Activated B cell treated with CpG ODN at 0.5 μM for 24 hours (primary cell): ENCODE measurements at regions of chr9 and their contacts with region 1.

Region 1: DNA sequence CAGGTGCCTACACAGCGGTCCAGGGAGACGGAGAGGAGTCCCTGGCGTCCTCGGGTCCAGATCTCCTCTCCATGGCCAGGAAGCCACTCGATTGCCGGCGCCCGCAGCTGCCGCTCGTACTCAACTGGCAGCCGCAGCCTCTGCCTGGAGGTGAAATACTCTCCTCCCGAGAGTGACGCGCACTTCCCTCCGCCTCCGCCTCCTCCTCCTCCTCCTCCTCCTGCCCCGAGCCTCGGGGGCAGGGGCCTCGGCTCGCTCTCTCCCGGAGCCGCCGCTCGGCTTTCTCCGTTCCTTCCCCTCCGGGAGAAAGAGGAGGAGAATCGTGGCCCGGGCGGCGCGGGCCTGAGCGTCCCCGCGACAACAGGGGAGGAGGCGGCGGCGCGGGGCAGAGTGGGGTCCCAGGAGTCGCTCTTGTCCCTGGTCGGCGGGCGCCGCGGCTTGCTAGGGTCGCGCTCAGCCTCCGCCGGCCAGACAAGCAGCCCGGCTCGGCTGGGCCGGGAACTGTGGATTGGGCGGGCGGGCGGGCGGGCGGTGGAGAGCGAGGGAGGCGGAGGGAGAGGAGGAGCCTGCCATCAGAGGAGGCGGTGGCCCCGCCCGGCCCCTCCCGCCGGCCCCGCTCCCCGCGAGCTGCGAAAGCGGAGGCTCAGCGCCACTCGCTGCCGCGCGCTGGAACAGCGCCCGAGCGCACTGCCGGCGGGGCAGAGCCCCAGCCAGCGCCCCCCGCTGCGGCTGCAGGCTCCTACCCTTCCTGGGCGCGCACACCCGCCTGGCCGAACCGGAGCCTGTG is at the start of gene CEMIP2:
- DNase-seq: peak; percentile 84
- ATAC-seq: peak; percentile 82
- H3K4me3 Mint-ChIP-seq: peak within 1 kb of the TSS; percentile 98
- H3K27ac Mint-ChIP-seq: peak within 1 kb of the TSS; percentile 93
- H3K4me1 Mint-ChIP-seq: peaks cover 52% of the 10 kb centered on the region
- H3K27me3 Mint-ChIP-seq: no peaks in the 10 kb centered on the region
- CTCF ChIP-seq: no peak
- total RNA-seq, gene CEMIP2: 21.3 and 25.5 TPM in 2 replicates

Region 2: DNA sequence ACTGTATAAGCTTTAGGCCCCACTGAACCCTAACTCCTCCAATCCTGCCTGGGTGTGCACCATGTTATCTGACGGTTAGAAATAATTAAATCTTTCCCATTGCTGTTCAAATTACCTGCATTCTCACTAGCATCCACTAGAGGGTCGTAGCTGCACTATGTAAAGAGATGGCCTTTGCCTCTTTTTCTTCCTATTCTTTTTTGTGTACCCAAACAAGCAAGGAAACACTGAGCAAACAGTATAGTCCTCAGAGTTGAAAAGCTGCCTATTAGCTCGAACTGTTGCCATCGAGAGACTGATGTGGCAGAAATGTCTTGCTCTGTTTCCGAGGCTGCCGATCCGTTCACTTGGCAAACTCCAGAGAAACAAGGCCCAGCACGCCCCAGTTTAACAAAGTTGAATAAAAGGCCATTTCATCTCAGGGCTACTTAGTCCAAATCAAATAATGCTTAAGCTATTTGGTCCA is 483.4 kb before region 1 on chr9:
- CTCF ChIA-PET with region 1: interaction called, 5 read pairs
- POLR2A ChIA-PET with region 1: no interaction called
- intact Hi-C with region 1: loop called (anchors 1 kb)
- DNase-seq: no peak
- ATAC-seq: peak; percentile 61
- H3K4me3 Mint-ChIP-seq: no peak overlapping the region
- H3K27ac Mint-ChIP-seq: no peak overlapping the region
- H3K4me1 Mint-ChIP-seq: no peaks in the 10 kb centered on the region
- H3K27me3 Mint-ChIP-seq: peaks cover 2% of the 10 kb centered on the region
- CTCF ChIP-seq: no peak

Region 3: GRCh38 chr9:71647094-71647591 is 121.4 kb before region 1 on chr9:
- CTCF ChIA-PET with region 1: no interaction called
- POLR2A ChIA-PET with region 1: no interaction called
- intact Hi-C with region 1: no loop called
- DNase-seq: no peak
- ATAC-seq: no peak
- H3K4me3 Mint-ChIP-seq: peak overlapping the region; percentile 29
- H3K27ac Mint-ChIP-seq: no peak overlapping the region
- H3K4me1 Mint-ChIP-seq: peaks cover 12% of the 10 kb centered on the region
- H3K27me3 Mint-ChIP-seq: peaks cover 9% of the 10 kb centered on the region
- CTCF ChIP-seq: no peak

Region 4: GRCh38 chr9:71703172-71703872 is 65.3 kb before region 1 on chr9:
- CTCF ChIA-PET with region 1: no interaction called
- POLR2A ChIA-PET with region 1: no interaction called
- intact Hi-C with region 1: loop called (anchors 5 kb)
- DNase-seq: no peak
- ATAC-seq: no peak
- H3K4me3 Mint-ChIP-seq: no peak overlapping the region
- H3K27ac Mint-ChIP-seq: no peak overlapping the region
- H3K4me1 Mint-ChIP-seq: no peaks in the 10 kb centered on the region
- H3K27me3 Mint-ChIP-seq: no peaks in the 10 kb centered on the region
- CTCF ChIP-seq: no peak

Region 5: DNA sequence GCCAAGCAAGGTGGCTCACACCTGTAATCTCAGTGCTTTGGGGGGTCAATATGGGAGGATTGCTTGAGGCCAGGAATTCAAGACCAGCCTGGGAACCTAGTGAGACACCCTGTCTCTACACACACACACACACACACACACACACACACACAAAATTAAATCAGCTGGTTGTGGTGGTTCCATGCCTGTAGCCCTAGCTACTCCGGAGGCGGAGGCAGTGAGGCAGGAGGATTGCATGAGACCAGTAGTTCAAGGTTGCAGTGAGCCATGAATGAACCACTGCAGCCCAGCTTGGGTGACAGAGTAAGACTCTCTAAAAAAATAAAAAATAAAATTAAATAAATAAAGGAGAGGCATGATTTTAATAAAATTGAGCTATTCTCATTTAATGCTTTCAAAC is 13.4 kb before region 1 on chr9:
- CTCF ChIA-PET with region 1: interaction called, 3 read pairs
- POLR2A ChIA-PET with region 1: interaction called, 10 read pairs
- intact Hi-C with region 1: no loop called
- DNase-seq: no peak
- ATAC-seq: no peak
- H3K4me3 Mint-ChIP-seq: no peak overlapping the region
- H3K27ac Mint-ChIP-seq: no peak overlapping the region
- H3K4me1 Mint-ChIP-seq: peaks cover 51% of the 10 kb centered on the region
- H3K27me3 Mint-ChIP-seq: no peaks in the 10 kb centered on the region
- CTCF ChIP-seq: no peak

Region 6: GRCh38 chr9:71806901-71807307 is 38.3 kb after region 1 on chr9:
- CTCF ChIA-PET with region 1: interaction called, 6 read pairs
- POLR2A ChIA-PET with region 1: interaction called, 8 read pairs
- intact Hi-C with region 1: loop called (anchors 1 kb)
- DNase-seq: no peak
- ATAC-seq: peak; percentile 96
- H3K4me3 Mint-ChIP-seq: no peak overlapping the region
- H3K27ac Mint-ChIP-seq: peak overlapping the region; percentile 57
- H3K4me1 Mint-ChIP-seq: peaks cover 16% of the 10 kb centered on the region
- H3K27me3 Mint-ChIP-seq: no peaks in the 10 kb centered on the region
- CTCF ChIP-seq: peak; percentile 21

Region 7: GRCh38 chr9:71911253-71912074 is 142.9 kb after region 1 on chr9 and contains the start of gene C9orf85:
- CTCF ChIA-PET with region 1: no interaction called
- POLR2A ChIA-PET with region 1: interaction called, 38 read pairs
- intact Hi-C with region 1: loop called (anchors 1 kb)
- DNase-seq: peak; percentile 89
- ATAC-seq: peak; percentile 91
- H3K4me3 Mint-ChIP-seq: peak within 1 kb of the TSS; percentile 100
- H3K27ac Mint-ChIP-seq: peak within 1 kb of the TSS; percentile 98
- H3K4me1 Mint-ChIP-seq: peaks cover 67% of the 10 kb centered on the region
- H3K27me3 Mint-ChIP-seq: no peaks in the 10 kb centered on the region
- CTCF ChIP-seq: no peak
- total RNA-seq, gene C9orf85: 9.5 and 9.8 TPM in 2 replicates